H1 (cell line): ENCODE measurements at regions of chr22 and their contacts with region 1.

Region 1: GRCh38 chr22:26679003-26679629 is 21.7 kb downstream of the MIAT start:
- DNase-seq: peak; percentile 71 to 94
- H3K4me3 ChIP-seq: no peak overlapping the region
- H3K27ac ChIP-seq: no peak overlapping the region
- H3K4me1 ChIP-seq: peaks cover 4 to 11% (median 8%) of the 10 kb centered on the region in 4 experiments
- H3K27me3 ChIP-seq: no peaks in the 10 kb centered on the region
- CTCF ChIP-seq: peak; percentile 84 to 99 (median 85)
- EP300 ChIP-seq: no peak
- POLR2A ChIP-seq: no peak
- RAD21 ChIP-seq: peak; percentile 96 to 98

Region 2: GRCh38 chr22:26553056-26553752 is 125.9 kb before region 1 on chr22:
- CTCF ChIA-PET with region 1: no interaction called
- POLR2A ChIA-PET with region 1: no interaction called
- DNase-seq: no peak
- H3K4me3 ChIP-seq: no peak overlapping the region
- H3K27ac ChIP-seq: no peak overlapping the region
- H3K4me1 ChIP-seq: peaks cover 18 to 41% (median 29%) of the 10 kb centered on the region in 4 experiments
- H3K27me3 ChIP-seq: no peaks in the 10 kb centered on the region
- CTCF ChIP-seq: no peak
- EP300 ChIP-seq: no peak
- POLR2A ChIP-seq: no peak
- RAD21 ChIP-seq: no peak

Region 3: DNA sequence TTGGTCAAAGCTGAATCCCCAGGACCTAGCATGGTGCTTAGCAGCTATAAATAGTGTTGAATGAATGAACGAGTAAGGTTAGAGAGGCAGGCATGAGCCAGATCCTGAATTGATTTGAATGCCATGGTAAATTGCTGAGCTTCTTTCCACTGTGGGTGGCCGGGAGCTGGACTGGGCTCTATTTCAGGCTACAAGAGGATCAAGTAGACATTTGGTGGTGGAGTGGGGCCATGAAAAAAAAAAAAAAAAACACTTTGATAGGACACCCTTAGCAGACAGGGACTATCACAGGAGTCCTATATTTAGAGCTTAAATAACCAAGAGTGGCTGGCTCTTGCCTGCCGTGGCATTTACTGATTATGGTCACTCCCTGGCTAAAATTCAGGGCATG is 55.9 kb after region 1 on chr22:
- CTCF ChIA-PET with region 1: interaction called, 12 read pairs
- POLR2A ChIA-PET with region 1: no interaction called
- DNase-seq: no peak
- H3K4me3 ChIP-seq: no peak overlapping the region
- H3K27ac ChIP-seq: no peak overlapping the region
- H3K4me1 ChIP-seq: peaks cover 0 to 9% (median 1%) of the 10 kb centered on the region in 4 experiments; a peak in 3 of 7 replicates
- H3K27me3 ChIP-seq: no peaks in the 10 kb centered on the region
- CTCF ChIP-seq: no peak
- EP300 ChIP-seq: no peak
- POLR2A ChIP-seq: no peak
- RAD21 ChIP-seq: no peak

Region 4: GRCh38 chr22:26740253-26740652 is 61.1 kb after region 1 on chr22:
- CTCF ChIA-PET with region 1: interaction called, 12 read pairs
- POLR2A ChIA-PET with region 1: no interaction called
- DNase-seq: no peak
- H3K4me3 ChIP-seq: no peak overlapping the region
- H3K27ac ChIP-seq: no peak overlapping the region
- H3K4me1 ChIP-seq: 0 out of 7 replicates have a peak, but pooled peaks cover 0 to 2% (median 0%) of the 10 kb centered on the region in 4 experiments
- H3K27me3 ChIP-seq: no peaks in the 10 kb centered on the region
- CTCF ChIP-seq: no peak
- EP300 ChIP-seq: no peak
- POLR2A ChIP-seq: no peak
- RAD21 ChIP-seq: no peak

Region 5: DNA sequence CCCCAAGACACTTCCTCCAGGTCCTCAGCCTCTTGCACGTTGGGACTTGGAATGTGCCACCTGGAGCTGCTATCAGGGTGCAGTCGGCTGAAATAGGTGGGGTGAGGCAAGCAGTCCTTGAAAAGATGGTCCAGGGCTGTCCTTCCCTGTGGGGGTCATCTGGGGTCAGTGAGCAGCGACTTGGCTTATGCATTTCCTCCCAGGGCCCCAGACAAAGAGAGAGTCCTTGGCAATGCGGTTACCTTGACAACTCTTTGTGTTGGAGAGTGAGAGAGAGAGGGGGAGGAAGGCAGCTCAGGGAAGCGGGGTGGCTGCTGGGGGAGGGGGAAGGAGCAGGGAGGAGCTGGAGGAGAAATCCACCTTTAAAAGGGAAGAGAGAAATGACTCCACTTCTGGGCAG is 72.1 kb after region 1 on chr22:
- CTCF ChIA-PET with region 1: interaction called, 18 read pairs
- POLR2A ChIA-PET with region 1: interaction called, 12 read pairs
- DNase-seq: peak; percentile 83 to 91
- H3K4me3 ChIP-seq: peak overlapping the region in 3 of 4 experiments; percentile 10 to 33 (median 23); a peak in 3 of 8 replicates
- H3K27ac ChIP-seq: peak overlapping the region; percentile 53
- H3K4me1 ChIP-seq: peaks cover 22 to 36% (median 24%) of the 10 kb centered on the region in 4 experiments
- H3K27me3 ChIP-seq: no peaks in the 10 kb centered on the region; a peak in 1 of 7 replicates
- CTCF ChIP-seq: no peak
- EP300 ChIP-seq: peak in 1 of 2 experiments; percentile 90; a peak in 2 of 3 replicates
- POLR2A ChIP-seq: no peak
- RAD21 ChIP-seq: no peak